ENCODE measurements at regions of chr4 and their contacts with region 1.

Region 1: GRCh38 chr4:147866532-147867271 is 134.8 kb downstream of the ARHGAP10 start:
- DNase-seq: peak; percentile 84
- H3K4me3 Mint-ChIP-seq: no peak overlapping the region
- H3K27ac Mint-ChIP-seq: no peak overlapping the region
- H3K4me1 Mint-ChIP-seq: no peaks in the 10 kb centered on the region
- H3K27me3 Mint-ChIP-seq: no peaks in the 10 kb centered on the region
- CTCF ChIP-seq: peak; percentile 79

Region 2: GRCh38 chr4:147111033-147111367 is 755.7 kb before region 1 on chr4:
- CTCF ChIA-PET with region 1: no interaction called
- intact Hi-C with region 1: loop called (anchors 2 kb)
- DNase-seq: no peak
- H3K4me3 Mint-ChIP-seq: no peak overlapping the region
- H3K27ac Mint-ChIP-seq: no peak overlapping the region
- H3K4me1 Mint-ChIP-seq: no peaks in the 10 kb centered on the region
- H3K27me3 Mint-ChIP-seq: no peaks in the 10 kb centered on the region
- CTCF ChIP-seq: no peak

Region 3: DNA sequence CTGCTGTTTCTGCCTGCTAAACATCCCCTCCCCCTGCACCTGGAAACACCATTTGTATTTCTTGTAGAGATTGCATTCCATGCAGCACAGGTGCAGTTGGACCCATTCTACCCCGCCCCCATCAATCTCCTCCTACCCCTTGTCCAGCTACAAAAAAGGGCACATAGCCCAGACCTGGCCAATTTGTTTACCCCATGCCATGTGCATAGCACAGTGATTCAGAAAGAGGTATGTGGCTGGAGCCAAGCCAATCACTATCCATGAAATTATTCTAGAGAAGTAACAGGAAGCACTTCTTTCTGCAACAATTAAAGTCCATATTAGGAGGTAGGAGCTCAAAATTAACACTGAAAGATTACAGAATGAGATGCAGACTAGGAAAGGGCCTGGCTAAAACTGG is 269.7 kb before region 1 on chr4:
- CTCF ChIA-PET with region 1: interaction called, 10 read pairs
- intact Hi-C with region 1: loop called (anchors 1 kb)
- DNase-seq: peak; percentile 67
- H3K4me3 Mint-ChIP-seq: no peak overlapping the region
- H3K27ac Mint-ChIP-seq: peak overlapping the region; percentile 74
- H3K4me1 Mint-ChIP-seq: peaks cover 27% of the 10 kb centered on the region
- H3K27me3 Mint-ChIP-seq: no peaks in the 10 kb centered on the region
- CTCF ChIP-seq: no peak

Region 4: DNA sequence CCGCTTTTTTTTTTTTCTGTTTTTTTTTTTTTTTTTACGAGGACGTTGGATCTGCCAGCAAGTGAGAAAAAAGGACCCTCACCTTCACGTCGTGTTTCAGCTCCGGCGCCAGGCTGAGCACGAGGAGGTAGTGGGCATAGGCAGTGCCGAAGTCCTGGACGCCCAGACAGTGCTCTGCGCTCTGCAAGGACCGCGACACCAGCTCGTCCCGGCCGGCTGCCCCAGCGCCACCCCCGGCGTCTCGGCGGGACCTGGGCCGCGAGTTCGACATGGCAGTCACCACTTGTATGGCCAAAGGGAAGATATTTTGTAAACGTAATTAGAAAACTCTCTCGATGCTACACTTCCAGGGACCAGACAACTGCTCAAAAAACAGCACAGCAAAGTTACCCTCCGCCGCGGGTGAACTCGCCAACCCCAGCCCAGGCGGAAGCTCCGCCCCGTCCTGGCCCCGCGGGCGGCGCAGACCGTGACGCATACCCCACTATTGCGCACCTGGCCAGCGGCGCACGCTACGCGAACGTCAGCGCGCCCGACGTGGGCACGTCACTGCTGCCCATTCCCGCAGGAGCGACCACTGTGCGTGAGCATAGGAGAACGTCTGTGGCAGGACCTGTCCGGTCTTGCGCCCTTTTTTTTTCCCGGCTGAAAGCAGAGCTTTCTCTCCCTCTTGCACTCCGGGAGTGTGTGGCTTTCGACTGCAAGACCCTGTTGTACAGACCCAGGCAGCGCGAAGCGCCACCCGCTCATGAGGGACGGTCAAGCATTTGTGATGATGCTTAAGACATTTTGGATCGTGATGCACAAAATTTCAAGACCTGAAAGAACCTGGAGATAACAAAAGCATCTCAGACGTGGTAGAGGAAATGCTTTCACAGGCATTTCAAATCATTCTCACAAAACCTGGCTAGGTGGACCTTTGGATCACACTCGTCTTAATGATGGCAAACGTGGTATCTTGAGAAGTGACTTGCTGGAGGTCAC is 182.7 kb before region 1 on chr4 and contains the start of gene PRMT9:
- CTCF ChIA-PET with region 1: interaction called, 10 read pairs
- intact Hi-C with region 1: no loop called
- DNase-seq: peak; percentile 86
- H3K4me3 Mint-ChIP-seq: peak within 1 kb of the TSS; percentile 85
- H3K27ac Mint-ChIP-seq: peak within 1 kb of the TSS; percentile 59
- H3K4me1 Mint-ChIP-seq: peaks cover 9% of the 10 kb centered on the region
- H3K27me3 Mint-ChIP-seq: no peaks in the 10 kb centered on the region
- CTCF ChIP-seq: no peak
- total RNA-seq, gene PRMT9: 4.8 and 7.3 TPM in 2 replicates

Region 5: DNA sequence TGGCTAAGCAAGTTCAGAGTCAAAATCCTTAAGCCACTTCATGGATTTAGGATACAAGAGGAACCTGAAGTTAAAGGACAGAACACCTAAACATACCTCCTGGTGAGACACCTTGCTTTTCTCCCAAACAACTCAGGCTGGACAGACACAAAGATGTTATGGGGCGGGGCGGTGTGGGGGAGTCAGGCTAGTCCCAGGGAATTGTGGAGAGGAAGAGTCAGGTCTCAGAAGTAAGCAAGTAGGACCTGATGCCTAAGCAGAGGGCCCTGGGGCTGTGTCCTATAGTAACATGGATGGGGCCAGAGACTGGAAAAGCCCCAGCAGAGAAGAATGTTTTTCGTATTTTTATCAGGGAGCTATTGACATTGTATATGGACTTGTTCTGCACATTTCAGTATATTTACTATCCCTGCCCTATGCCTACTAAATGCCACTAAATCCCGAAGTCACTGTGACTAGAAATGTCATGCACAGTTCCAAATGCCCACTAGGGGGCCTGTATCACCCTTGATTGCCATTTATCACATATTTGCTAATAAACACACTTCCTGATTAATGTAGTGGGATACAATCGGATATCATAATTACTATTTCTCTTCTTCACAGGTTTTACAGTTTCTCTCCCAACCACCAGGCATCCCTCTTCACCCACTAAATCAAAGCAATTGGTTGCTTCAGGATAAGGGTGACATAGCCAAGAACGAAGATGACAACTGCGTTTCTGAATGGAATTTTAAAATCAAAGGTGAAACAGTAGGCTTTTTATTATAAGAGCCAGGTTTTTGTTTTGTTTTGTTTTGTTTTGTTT is 158.6 kb before region 1 on chr4:
- CTCF ChIA-PET with region 1: interaction called, 12 read pairs
- intact Hi-C with region 1: loop called (anchors 1 kb)
- DNase-seq: peak; percentile 41
- H3K4me3 Mint-ChIP-seq: no peak overlapping the region
- H3K27ac Mint-ChIP-seq: no peak overlapping the region
- H3K4me1 Mint-ChIP-seq: peaks cover 7% of the 10 kb centered on the region
- H3K27me3 Mint-ChIP-seq: no peaks in the 10 kb centered on the region
- CTCF ChIP-seq: peak; percentile 52

Region 6: GRCh38 chr4:148376151-148376550 is 509.4 kb after region 1 on chr4:
- CTCF ChIA-PET with region 1: no interaction called
- intact Hi-C with region 1: no loop called
- DNase-seq: peak; percentile 56
- H3K4me3 Mint-ChIP-seq: peak overlapping the region; percentile 41
- H3K27ac Mint-ChIP-seq: peak overlapping the region; percentile 86
- H3K4me1 Mint-ChIP-seq: peaks cover 22% of the 10 kb centered on the region
- H3K27me3 Mint-ChIP-seq: no peaks in the 10 kb centered on the region
- CTCF ChIP-seq: no peak